Calu3 (cell line): ENCODE measurements at regions of chr4 and their contacts with region 1.

Region 1: GRCh38 chr4:80751200-80751599 is 279.3 kb upstream of the BMP3 start:
- DNase-seq: no peak
- H3K4me3 Mint-ChIP-seq: no peak overlapping the region
- H3K27ac Mint-ChIP-seq: no peak overlapping the region
- H3K4me1 Mint-ChIP-seq: no peaks in the 10 kb centered on the region
- H3K27me3 Mint-ChIP-seq: no peaks in the 10 kb centered on the region
- CTCF ChIP-seq: no peak

Region 2: DNA sequence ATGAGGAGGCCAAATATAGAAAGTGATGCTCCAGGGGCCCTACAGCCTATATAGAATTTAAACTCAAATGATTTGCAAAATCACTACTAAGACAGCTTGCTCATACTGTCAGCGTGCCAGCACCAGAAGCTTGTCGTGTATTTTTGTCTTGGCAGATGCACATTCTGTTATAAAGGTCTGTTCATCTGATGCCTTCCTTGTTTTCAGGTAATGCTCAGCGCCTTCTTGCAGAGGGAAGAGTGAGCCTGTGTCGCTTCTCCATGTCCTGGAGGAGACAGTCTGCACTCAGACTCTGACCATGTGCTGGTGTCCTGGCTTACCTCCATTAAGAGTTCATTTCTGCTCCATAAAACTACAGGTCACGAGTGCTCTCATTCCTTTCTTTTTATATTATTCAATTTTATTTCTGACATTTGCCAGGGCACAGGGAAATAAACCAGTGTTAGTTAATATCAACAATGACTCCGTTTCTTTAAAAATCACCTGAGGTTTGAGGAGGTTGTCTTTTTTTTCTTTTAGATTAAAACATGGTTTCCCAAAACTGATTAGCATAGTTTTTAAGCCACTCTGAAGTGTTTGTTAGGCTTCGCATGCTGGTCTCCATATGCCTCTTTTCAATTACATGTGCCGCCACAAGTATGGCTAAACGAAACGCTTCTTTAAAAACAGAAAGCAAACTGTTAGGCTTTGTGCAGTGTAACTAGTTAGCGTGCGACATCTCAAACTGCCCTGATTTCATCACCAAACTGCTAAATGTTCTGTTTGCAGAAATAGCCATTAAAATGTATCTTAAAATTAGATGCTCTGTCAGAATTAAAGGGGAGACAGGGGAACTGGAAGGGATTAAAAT is 1128.0 kb before region 1 on chr4:
- CTCF ChIA-PET with region 1: no interaction called
- intact Hi-C with region 1: loop called (anchors 10 kb)
- DNase-seq: no peak
- H3K4me3 Mint-ChIP-seq: no peak overlapping the region
- H3K27ac Mint-ChIP-seq: no peak overlapping the region
- H3K4me1 Mint-ChIP-seq: no peaks in the 10 kb centered on the region
- H3K27me3 Mint-ChIP-seq: no peaks in the 10 kb centered on the region
- CTCF ChIP-seq: no peak

Region 3: GRCh38 chr4:80538276-80538926 is 212.8 kb before region 1 on chr4:
- CTCF ChIA-PET with region 1: no interaction called
- intact Hi-C with region 1: no loop called
- DNase-seq: no peak
- H3K4me3 Mint-ChIP-seq: no peak overlapping the region
- H3K27ac Mint-ChIP-seq: no peak overlapping the region
- H3K4me1 Mint-ChIP-seq: no peaks in the 10 kb centered on the region
- H3K27me3 Mint-ChIP-seq: no peaks in the 10 kb centered on the region
- CTCF ChIP-seq: no peak

Region 4: DNA sequence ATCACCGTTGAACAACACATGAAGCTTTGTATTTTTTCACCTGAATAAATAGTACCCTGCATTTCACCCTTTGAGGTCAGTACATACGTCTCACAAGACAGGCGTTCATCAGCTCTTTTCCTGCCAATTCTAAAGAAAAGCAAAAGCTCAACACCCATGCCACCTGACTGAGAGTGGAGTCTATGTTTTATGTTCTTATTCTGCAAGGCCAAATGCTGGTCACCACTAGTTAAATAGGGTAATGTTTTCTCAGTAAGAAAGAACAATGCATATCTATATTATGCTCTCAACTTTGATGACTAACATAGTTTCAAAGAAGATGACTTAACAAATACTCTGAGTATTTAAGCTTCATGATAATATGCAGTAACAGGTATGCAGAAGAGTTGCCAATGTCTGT is 57.0 kb before region 1 on chr4:
- CTCF ChIA-PET with region 1: no interaction called
- intact Hi-C with region 1: no loop called
- DNase-seq: peak; percentile 11
- H3K4me3 Mint-ChIP-seq: no peak overlapping the region
- H3K27ac Mint-ChIP-seq: no peak overlapping the region
- H3K4me1 Mint-ChIP-seq: no peaks in the 10 kb centered on the region
- H3K27me3 Mint-ChIP-seq: no peaks in the 10 kb centered on the region
- CTCF ChIP-seq: no peak